Activated CD4-positive, alpha-beta T cell treated with anti-CD3 and anti-CD28 coated beads, Interleukin-2, amount 10 ng/mL, durations not matched to agents 24 days and 14 days (primary cell): ENCODE measurements at regions of chr12 and their contacts with region 1.

Region 1: GRCh38 chr12:21657326-21658077 is at the start of gene LDHB:
- DNase-seq: peak; percentile 98
- H3K4me3 Mint-ChIP-seq: peak within 1 kb of the TSS; percentile 93
- H3K27ac Mint-ChIP-seq: peak within 1 kb of the TSS; percentile 99
- H3K4me1 Mint-ChIP-seq: peaks cover 37% of the 10 kb centered on the region
- H3K27me3 Mint-ChIP-seq: peaks cover 3% of the 10 kb centered on the region
- total RNA-seq, gene LDHB: 1,574 and 1,607 TPM in 2 replicates

Region 2: DNA sequence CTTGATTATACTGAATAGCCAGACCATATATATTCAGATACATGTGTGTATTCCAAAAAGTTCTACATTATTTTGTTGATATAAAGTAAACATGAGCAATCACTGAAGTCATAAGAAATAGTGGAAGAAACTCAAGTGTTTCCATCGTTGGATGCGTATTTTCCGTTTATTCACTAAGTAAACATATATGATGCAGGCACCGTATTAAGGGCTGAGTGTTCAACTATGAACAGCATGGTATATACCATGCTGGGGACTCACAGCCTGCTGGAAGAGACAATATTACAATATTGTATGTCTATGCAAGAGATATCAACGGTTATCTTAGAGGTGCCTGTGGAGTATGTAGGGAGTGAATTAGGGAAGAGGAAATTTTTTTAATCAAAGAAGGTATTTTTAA is 218.9 kb before region 1 on chr12:
- intact Hi-C with region 1: loop called (anchors 1 kb)
- DNase-seq: no peak
- H3K4me3 Mint-ChIP-seq: peak overlapping the region; percentile 95
- H3K27ac Mint-ChIP-seq: peak overlapping the region; percentile 97
- H3K4me1 Mint-ChIP-seq: peaks cover 34% of the 10 kb centered on the region
- H3K27me3 Mint-ChIP-seq: peaks cover 5% of the 10 kb centered on the region

Region 3: GRCh38 chr12:21613931-21614330 is 43.6 kb before region 1 on chr12:
- intact Hi-C with region 1: loop called (anchors 1 kb)
- DNase-seq: no peak
- H3K4me3 Mint-ChIP-seq: no peak overlapping the region
- H3K27ac Mint-ChIP-seq: no peak overlapping the region
- H3K4me1 Mint-ChIP-seq: peaks cover 36% of the 10 kb centered on the region
- H3K27me3 Mint-ChIP-seq: no peaks in the 10 kb centered on the region

Region 4: DNA sequence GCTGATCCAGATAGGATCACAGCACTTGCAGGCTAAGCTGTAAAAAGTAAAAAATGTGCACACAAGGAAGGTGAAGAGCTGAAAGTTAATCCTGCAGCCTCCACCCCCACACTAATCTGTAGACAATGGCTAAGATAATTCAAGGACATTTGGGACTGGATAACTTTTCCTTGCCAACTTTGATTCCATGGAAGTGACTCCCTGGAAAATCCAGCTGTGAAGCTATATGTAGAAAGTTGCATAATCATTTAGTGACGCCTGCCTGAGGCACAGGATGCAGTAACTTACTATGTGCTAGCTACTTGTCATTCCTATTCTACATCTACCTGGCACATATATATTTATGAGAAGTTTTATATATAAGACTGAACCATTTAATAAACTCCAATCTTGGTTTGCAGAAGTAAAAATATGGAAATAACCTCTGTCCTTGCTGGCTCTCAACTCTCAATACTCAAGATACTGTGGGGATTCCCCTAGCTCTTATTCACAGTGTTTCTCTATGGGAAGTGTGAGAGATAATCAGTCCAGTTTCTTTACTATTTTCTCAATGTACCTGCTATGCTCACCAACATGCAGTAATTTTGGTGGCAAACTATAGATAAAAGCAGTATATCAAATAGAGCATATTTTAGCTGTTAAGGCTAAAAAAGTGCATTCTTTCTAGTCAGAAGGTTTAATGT is 14.7 kb before region 1 on chr12:
- intact Hi-C with region 1: loop called (anchors 2 kb)
- DNase-seq: no peak
- H3K4me3 Mint-ChIP-seq: peak overlapping the region; percentile 4
- H3K27ac Mint-ChIP-seq: no peak overlapping the region
- H3K4me1 Mint-ChIP-seq: peaks cover 55% of the 10 kb centered on the region
- H3K27me3 Mint-ChIP-seq: no peaks in the 10 kb centered on the region

Region 5: DNA sequence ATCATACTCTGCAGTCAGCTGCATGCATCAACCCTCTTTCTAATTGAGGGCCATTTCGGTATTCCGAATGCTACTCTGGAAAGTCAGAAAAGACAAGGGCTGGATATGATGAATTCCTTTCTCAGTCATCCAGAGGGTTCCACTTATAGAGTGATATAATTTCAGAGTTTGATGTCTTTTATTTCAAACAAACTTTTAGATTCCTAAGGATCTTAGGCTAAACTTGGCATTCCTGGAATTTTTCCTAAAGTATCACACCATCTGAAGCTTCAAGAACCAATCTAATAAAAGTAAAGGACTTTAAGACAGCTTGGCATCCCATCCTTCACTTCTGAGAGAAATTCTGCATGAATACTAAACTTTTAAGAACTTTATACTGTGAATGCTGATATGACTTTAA is 186.3 kb after region 1 on chr12:
- intact Hi-C with region 1: no loop called
- DNase-seq: no peak
- H3K4me3 Mint-ChIP-seq: no peak overlapping the region
- H3K27ac Mint-ChIP-seq: no peak overlapping the region
- H3K4me1 Mint-ChIP-seq: no peaks in the 10 kb centered on the region
- H3K27me3 Mint-ChIP-seq: no peaks in the 10 kb centered on the region

Region 6: GRCh38 chr12:22544038-22544979 is 886.8 kb after region 1 on chr12 and contains the start of gene C2CD5:
- intact Hi-C with region 1: loop called (anchors 5 kb)
- DNase-seq: peak; percentile 98
- H3K4me3 Mint-ChIP-seq: peak within 1 kb of the TSS; percentile 92
- H3K27ac Mint-ChIP-seq: peak within 1 kb of the TSS; percentile 97
- H3K4me1 Mint-ChIP-seq: peaks cover 34% of the 10 kb centered on the region
- H3K27me3 Mint-ChIP-seq: peaks cover 16% of the 10 kb centered on the region
- total RNA-seq, gene C2CD5: 31.4 and 35.1 TPM in 2 replicates